Left ventricle myocardium superior (tissue), 1 donor: ENCODE measurements at regions of chr4 and their contacts with region 1.

Region 1: DNA sequence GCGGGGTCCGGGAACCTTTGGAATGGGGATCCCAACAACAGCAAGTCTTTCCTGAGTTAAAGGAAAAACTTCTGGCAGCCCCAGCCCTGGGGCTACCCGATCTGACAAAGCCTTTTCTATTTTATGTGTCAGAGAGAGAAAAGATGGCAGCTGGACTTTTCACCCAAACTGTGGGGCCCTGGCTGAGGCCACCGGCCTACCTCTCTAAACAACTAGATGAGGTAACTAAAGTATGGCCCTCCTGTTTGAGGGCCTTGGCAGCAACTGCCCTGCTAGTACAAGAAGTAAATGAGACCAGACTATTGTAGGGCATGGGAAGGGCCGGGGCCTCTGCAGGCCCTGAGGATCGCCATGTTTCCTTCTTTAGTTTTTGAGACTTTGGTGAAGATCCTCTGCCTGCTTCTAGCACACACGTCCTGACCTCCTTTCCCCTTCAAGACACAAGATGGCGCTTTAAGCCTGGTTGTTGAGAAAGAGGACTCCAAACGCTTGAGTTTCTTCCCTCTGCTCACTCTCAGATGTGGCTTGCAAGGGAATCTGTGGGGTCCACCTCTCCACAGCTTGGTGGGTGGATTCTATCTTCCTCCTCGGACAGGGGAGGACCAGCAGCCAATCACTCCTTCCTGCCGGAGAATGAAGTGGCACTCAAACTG is 18.5 kb upstream of the DRD5 start:
- DNase-seq: no peak
- ATAC-seq: no peak

Region 2: GRCh38 chr4:9898596-9899305 is 135.8 kb after region 1 on chr4:
- intact Hi-C with region 1: loop called (anchors 10 kb)
- DNase-seq: peak; percentile 69
- ATAC-seq: peak; percentile 92

Region 3: GRCh38 chr4:10018818-10019461 is 256.0 kb after region 1 on chr4:
- intact Hi-C with region 1: loop called (anchors 5 kb)
- DNase-seq: peak; percentile 99
- ATAC-seq: peak; percentile 93

Region 4: GRCh38 chr4:10045481-10045880 is 282.5 kb after region 1 on chr4:
- intact Hi-C with region 1: no loop called
- DNase-seq: no peak
- ATAC-seq: no peak

Region 5: GRCh38 chr4:10281996-10282395 is 519.0 kb after region 1 on chr4:
- intact Hi-C with region 1: no loop called
- DNase-seq: no peak
- ATAC-seq: no peak